Head of caudate nucleus (tissue), 42 donors: ENCODE measurements at regions of chr1 and their contacts with region 1.

Region 1: DNA sequence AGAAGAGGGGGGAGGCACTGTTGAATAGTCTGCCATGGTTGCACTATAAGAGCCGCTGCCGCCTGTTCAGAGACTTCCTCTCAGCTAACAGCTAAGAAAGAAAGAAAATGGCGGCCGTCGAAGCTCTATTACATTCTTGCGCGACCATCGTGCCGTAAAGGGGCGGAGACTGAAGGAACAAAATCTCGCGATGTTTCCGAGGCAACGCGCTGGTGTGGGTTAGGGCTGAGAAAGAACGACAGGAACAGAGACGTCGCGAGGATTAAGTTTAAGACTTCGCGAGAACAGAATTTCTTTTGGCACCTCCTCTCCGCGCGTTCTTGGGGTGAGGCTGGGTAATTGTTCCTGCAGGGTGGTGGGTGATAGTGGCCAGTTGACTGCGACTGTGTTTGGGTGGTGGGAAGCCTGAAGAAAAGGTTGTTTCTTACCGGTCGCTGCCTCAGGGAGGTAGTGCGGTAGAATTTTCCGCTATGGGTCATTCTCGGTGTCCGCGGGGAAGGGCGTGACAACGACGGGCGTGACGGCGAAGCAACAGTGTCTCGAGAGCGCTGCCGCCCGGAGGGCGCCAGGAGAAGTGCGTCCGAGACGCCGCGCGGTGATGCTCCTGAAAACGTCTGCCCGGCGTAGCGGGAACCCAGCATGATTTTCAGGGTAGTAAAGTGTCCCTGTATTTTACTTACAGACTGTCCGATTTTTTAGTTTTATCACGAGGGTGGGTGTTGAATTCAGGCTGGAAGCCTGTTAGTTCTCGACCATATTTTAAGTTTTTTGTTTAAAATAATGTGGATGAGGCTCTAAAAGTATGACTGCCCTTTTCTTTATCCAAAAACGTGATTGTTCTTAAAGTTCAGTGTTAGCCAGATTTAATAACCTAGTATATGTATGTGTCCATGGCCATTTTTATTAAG is at the start of gene FUBP1:
- DNase-seq: peak; percentile 84 to 97 (median 92)

Region 2: GRCh38 chr1:78004719-78005447 is 25.7 kb after region 1 on chr1 and contains the start of gene DNAJB4:
- intact Hi-C with region 1: loop called (anchors 2 kb)
- DNase-seq: peak in 39 of 42 donors; percentile 14 to 92 (median 70)

Region 3: GRCh38 chr1:78114034-78114956 is 135.1 kb after region 1 on chr1:
- intact Hi-C with region 1: loop called (anchors 10 kb)
- DNase-seq: peak in 38 of 42 donors; percentile 29 to 86 (median 59)